CD4-positive, alpha-beta memory T cell (primary cell): ENCODE measurements at regions of chr12 and their contacts with region 1.

Region 1: DNA sequence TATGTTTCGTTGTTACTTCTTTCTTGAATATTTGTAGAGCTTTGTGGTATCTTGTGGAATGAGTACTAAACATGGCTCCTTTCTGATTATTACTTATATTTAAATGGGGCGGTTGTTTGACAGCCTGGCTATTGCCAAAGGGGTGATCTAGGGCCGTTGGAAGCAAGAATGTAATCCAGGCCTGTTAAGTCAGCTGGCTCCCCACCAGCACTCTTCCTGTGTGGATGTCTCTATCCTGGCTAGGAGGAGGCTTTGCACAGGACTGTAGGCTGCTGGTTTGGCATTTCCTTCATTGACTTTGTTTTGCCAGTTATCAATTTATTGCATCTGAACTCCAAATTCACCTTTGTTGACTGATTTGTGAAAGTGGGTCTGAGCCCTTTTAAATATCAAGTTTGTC is 5.6 kb downstream of the FAM234B start:
- DNase-seq: no peak
- H3K4me3 ChIP-seq: no peak overlapping the region
- H3K4me3 Mint-ChIP-seq: no peak overlapping the region
- H3K27ac ChIP-seq: no peak overlapping the region
- H3K27ac Mint-ChIP-seq: no peak overlapping the region
- H3K4me1 ChIP-seq: peaks cover 8% of the 10 kb centered on the region
- H3K4me1 Mint-ChIP-seq: peaks cover 2 to 5% (median 4%) of the 10 kb centered on the region in 4 donors
- H3K27me3 ChIP-seq: no peaks in the 10 kb centered on the region
- H3K27me3 Mint-ChIP-seq: no peaks in the 10 kb centered on the region

Region 2: GRCh38 chr12:12294215-12295005 is 755.4 kb before region 1 on chr12:
- CTCF ChIA-PET with region 1: no interaction called
- POLR2A ChIA-PET with region 1: no interaction called
- intact Hi-C with region 1: loop called (anchors 10 kb)
- DNase-seq: no peak
- H3K4me3 ChIP-seq: no peak overlapping the region
- H3K4me3 Mint-ChIP-seq: no peak overlapping the region
- H3K27ac ChIP-seq: no peak overlapping the region
- H3K27ac Mint-ChIP-seq: no peak overlapping the region
- H3K4me1 ChIP-seq: no peaks in the 10 kb centered on the region
- H3K4me1 Mint-ChIP-seq: peaks cover 0 to 7% (median 2%) of the 10 kb centered on the region in 4 donors
- H3K27me3 ChIP-seq: no peaks in the 10 kb centered on the region
- H3K27me3 Mint-ChIP-seq: peaks cover 0 to 4% of the 10 kb centered on the region in 2 donors

Region 3: GRCh38 chr12:12992418-12993130 is 57.2 kb before region 1 on chr12:
- CTCF ChIA-PET with region 1: no interaction called
- POLR2A ChIA-PET with region 1: no interaction called
- intact Hi-C with region 1: no loop called
- DNase-seq: no peak
- H3K4me3 ChIP-seq: no peak overlapping the region
- H3K4me3 Mint-ChIP-seq: no peak overlapping the region
- H3K27ac ChIP-seq: no peak overlapping the region
- H3K27ac Mint-ChIP-seq: no peak overlapping the region
- H3K4me1 ChIP-seq: no peaks in the 10 kb centered on the region
- H3K4me1 Mint-ChIP-seq: peaks cover 6 to 28% (median 7%) of the 10 kb centered on the region in 4 donors
- H3K27me3 ChIP-seq: no peaks in the 10 kb centered on the region
- H3K27me3 Mint-ChIP-seq: no peaks in the 10 kb centered on the region